ENCODE measurements at regions of chr10 and their contacts with region 1.

Region 1: GRCh38 chr10:83617692-83618545 is 521.4 kb upstream of the GHITM start:
- DNase-seq: no peak
- ATAC-seq: no peak
- H3K4me3 ChIP-seq: no peak overlapping the region
- H3K27ac ChIP-seq: no peak overlapping the region
- H3K4me1 ChIP-seq: peaks cover 0 to 15% (median 5%) of the 10 kb centered on the region in 9 donors
- H3K27me3 ChIP-seq: no peaks in the 10 kb centered on the region
- CTCF ChIP-seq: no peak

Region 2: GRCh38 chr10:83633547-83633946 is 15.6 kb after region 1 on chr10:
- intact Hi-C with region 1: loop called in 1 of 10 experiments (anchors 1 kb)
- DNase-seq: no peak
- ATAC-seq: no peak
- H3K4me3 ChIP-seq: no peak overlapping the region
- H3K27ac ChIP-seq: no peak overlapping the region
- H3K4me1 ChIP-seq: no peaks in the 10 kb centered on the region
- H3K27me3 ChIP-seq: no peaks in the 10 kb centered on the region
- CTCF ChIP-seq: no peak